Esophagus muscularis mucosa (tissue), 4 donors: ENCODE measurements at regions of chr2 and their contacts with region 1.

Region 1: GRCh38 chr2:171687287-171688128 is at the start of gene DYNC1I2:
- DNase-seq: peak; percentile 97
- H3K4me3 ChIP-seq: peak within 1 kb of the TSS; percentile 74 to 94 (median 87)
- H3K27ac ChIP-seq: peak within 1 kb of the TSS; percentile 76 to 87 (median 85)
- H3K4me1 ChIP-seq: peaks cover 15 to 28% (median 25%) of the 10 kb centered on the region in 4 donors
- H3K27me3 ChIP-seq: no peaks in the 10 kb centered on the region
- CTCF ChIP-seq: peak in 1 of 3 experiments; percentile 9
- EP300 ChIP-seq: no peak
- POLR2A ChIP-seq: no peak
- total RNA-seq, gene DYNC1I2: 99.1 to 122 (median 112) TPM

Region 2: GRCh38 chr2:171433763-171434670 is 253.5 kb before region 1 on chr2 and contains the starts of genes DCAF17 and METTL8:
- intact Hi-C with region 1: loop called (anchors 10 kb)
- DNase-seq: peak; percentile 97
- H3K4me3 ChIP-seq: peak within 1 kb of the TSS; percentile 69 to 87 (median 76)
- H3K27ac ChIP-seq: peak within 1 kb of the TSS; percentile 93 to 98 (median 94)
- H3K4me1 ChIP-seq: peaks cover 10 to 49% (median 40%) of the 10 kb centered on the region in 4 donors
- H3K27me3 ChIP-seq: no peaks in the 10 kb centered on the region
- CTCF ChIP-seq: peak; percentile 8 to 30 (median 21)
- EP300 ChIP-seq: no peak
- POLR2A ChIP-seq: peak; percentile 14
- total RNA-seq, gene DCAF17: 12.0 to 22.8 (median 14.3) TPM
- total RNA-seq, gene METTL8: 22.1 to 43.3 (median 31.5) TPM

Region 3: GRCh38 chr2:171598713-171599319 is 88.7 kb before region 1 on chr2:
- intact Hi-C with region 1: loop called (anchors 10 kb)
- DNase-seq: peak; percentile 34
- H3K4me3 ChIP-seq: no peak overlapping the region
- H3K27ac ChIP-seq: no peak overlapping the region
- H3K4me1 ChIP-seq: no peaks in the 10 kb centered on the region
- H3K27me3 ChIP-seq: peaks cover 0 to 5% (median 0%) of the 10 kb centered on the region in 4 donors
- CTCF ChIP-seq: peak; percentile 63 to 76 (median 64)
- EP300 ChIP-seq: no peak
- POLR2A ChIP-seq: no peak

Region 4: GRCh38 chr2:171787333-171788072 is 100.0 kb after region 1 on chr2:
- intact Hi-C with region 1: no loop called
- DNase-seq: no peak
- H3K4me3 ChIP-seq: no peak overlapping the region
- H3K27ac ChIP-seq: no peak overlapping the region
- H3K4me1 ChIP-seq: no peaks in the 10 kb centered on the region
- H3K27me3 ChIP-seq: no peaks in the 10 kb centered on the region
- CTCF ChIP-seq: no peak
- EP300 ChIP-seq: no peak
- POLR2A ChIP-seq: no peak